ENCODE measurements at regions of chr3 and their contacts with region 1.

Region 1: GRCh38 chr3:167882067-167882667 is 146.6 kb downstream of the SERPINI1 start:
- DNase-seq: no peak
- H3K4me3 Mint-ChIP-seq: no peak overlapping the region
- H3K27ac Mint-ChIP-seq: no peak overlapping the region
- H3K4me1 Mint-ChIP-seq: peaks cover 4% of the 10 kb centered on the region
- H3K27me3 Mint-ChIP-seq: peaks cover 24% of the 10 kb centered on the region

Region 2: DNA sequence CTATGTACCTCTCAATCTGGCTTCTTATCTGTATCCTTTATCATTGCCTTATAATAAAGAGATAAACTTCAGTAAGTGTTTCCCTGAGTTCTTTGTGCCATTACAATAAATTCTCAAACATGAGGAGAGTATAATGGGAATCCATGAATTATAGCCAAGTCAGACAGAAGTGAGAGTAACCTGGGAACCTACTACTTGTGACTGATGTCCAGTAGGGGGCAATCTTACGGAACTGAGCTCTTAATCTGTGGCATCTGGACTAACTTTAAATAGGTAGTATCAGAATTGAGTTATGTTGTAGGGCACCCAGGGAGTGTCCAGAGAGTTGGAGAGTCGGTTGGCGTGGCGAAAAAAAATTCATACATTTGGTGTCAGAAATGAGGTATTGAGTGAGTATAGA is 1044.6 kb before region 1 on chr3:
- CTCF ChIA-PET with region 1: no interaction called
- intact Hi-C with region 1: loop called (anchors 5 kb)
- DNase-seq: no peak
- H3K4me3 Mint-ChIP-seq: no peak overlapping the region
- H3K27ac Mint-ChIP-seq: no peak overlapping the region
- H3K4me1 Mint-ChIP-seq: no peaks in the 10 kb centered on the region
- H3K27me3 Mint-ChIP-seq: no peaks in the 10 kb centered on the region

Region 3: DNA sequence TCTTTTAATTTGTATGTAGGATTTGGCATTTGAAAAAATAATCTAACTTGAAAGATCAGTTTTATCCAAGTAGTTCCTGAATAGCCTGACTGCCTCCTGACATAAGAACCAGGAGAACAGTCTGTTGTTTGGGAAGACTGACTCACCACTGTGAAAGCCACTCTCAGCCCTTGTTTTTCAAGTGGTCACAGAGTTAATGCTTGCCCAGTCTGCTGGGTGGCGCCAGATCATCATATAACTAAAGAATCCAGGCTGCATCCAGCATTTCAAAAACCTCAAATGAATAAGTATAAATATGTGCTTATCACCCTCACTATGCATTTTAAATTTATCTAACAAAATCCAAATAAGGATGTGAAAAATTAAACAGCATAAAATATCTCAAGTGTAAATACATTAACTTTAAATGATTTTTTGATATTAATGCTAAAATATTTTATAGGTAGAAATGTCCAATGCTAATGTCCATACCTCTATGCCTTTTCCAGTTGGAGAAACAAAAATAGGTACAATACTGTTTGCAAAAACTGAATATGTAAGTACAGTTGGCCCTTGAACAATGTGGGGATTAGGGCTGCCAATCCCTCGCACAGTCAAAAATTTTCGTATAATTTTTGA is 475.2 kb before region 1 on chr3:
- CTCF ChIA-PET with region 1: no interaction called
- intact Hi-C with region 1: loop called (anchors 1 kb)
- DNase-seq: peak; percentile 27
- H3K4me3 Mint-ChIP-seq: no peak overlapping the region
- H3K27ac Mint-ChIP-seq: no peak overlapping the region
- H3K4me1 Mint-ChIP-seq: no peaks in the 10 kb centered on the region
- H3K27me3 Mint-ChIP-seq: peaks cover 2% of the 10 kb centered on the region

Region 4: DNA sequence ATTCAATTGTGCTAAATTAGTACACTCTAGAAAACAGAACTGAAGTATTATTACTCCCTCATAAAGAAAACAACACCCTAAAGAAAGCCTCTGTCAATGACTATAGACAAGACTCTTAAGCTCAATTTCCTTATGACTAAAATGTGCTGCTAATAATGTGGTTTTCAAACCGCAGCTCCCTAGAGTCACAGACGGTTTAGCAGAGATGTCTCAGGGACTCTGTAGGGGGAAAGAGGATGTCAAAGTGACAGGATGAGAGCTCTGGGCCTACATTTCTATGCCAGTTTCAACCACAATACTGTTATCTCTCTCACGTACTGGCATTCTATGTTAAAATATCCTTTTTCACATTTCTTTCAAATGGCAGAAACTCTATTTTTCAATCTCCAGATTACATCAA is 190.8 kb before region 1 on chr3:
- CTCF ChIA-PET with region 1: interaction called, 3 read pairs
- intact Hi-C with region 1: loop called (anchors 2 kb)
- DNase-seq: peak; percentile 56
- H3K4me3 Mint-ChIP-seq: no peak overlapping the region
- H3K27ac Mint-ChIP-seq: no peak overlapping the region
- H3K4me1 Mint-ChIP-seq: peaks cover 40% of the 10 kb centered on the region
- H3K27me3 Mint-ChIP-seq: no peaks in the 10 kb centered on the region

Region 5: DNA sequence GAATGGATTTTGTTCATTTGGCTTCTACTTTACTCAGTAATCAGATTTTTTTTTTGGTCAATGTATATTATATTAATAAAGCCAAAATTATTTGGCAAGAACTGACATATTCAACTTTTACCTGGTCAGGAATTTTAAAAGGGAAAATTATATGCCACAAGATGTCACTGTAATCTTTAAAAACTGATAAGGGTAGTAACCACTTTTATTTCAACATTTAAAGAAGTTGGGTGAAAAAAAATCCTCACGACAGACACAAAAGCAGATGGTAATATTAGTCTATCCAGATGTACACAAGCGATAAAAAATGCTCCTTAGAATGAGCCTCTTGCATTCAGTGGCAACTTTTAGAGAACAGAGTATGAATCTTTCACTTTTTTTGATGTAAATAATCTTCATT is 44.7 kb before region 1 on chr3:
- CTCF ChIA-PET with region 1: interaction called, 3 read pairs
- intact Hi-C with region 1: loop called (anchors 1 kb)
- DNase-seq: no peak
- H3K4me3 Mint-ChIP-seq: no peak overlapping the region
- H3K27ac Mint-ChIP-seq: no peak overlapping the region
- H3K4me1 Mint-ChIP-seq: peaks cover 7% of the 10 kb centered on the region
- H3K27me3 Mint-ChIP-seq: peaks cover 7% of the 10 kb centered on the region